Activated CD4-positive, alpha-beta memory T cell treated with anti-CD3 and anti-CD28 coated beads for 36 hours (primary cell): ENCODE measurements at regions of chr4 and their contacts with region 1.

Region 1: DNA sequence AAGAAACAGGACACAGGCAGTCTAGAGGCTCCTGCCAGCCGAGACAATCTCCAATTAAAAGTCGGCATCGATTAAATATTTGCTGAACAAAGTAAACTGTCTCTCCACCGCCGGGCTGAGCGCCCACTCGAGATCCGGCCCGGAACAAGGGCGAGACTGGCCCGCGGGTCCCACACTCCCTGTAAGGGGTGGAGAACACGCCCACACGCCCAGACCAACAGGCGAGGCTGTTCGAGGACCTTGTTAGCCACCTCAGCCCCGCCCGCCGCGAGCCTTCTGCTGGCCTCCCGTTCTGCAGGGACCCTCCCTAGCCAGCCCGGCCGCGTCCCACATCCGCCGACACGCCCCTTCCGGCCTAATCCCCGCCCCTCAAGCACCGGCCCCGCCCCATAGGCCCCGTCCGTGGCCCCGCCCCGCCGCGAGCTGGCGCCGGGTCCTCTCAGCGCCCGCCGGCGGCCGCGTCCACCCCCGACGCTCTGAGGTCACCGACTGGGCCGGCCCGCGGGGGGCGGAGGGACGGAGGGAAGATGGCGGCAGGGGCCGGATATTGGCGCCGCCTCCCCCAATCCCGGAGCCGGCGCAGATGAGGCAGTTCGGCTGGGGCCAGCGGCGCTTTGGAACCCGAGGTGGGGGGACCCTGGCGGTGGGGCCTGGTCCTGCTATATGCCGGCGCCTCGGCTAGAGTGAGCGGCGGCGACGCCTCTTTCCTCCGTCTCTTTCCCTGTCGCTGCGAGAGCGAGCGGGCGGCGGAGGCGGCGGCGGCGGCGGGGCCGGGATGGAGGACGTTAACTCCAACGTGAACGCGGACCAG is at the start of gene SLAIN2:
- DNase-seq: peak; percentile 99
- H3K4me3 Mint-ChIP-seq: peak within 1 kb of the TSS; percentile 99
- H3K27ac Mint-ChIP-seq: peak within 1 kb of the TSS; percentile 98
- H3K4me1 Mint-ChIP-seq: peaks cover 64% of the 10 kb centered on the region
- H3K27me3 Mint-ChIP-seq: no peaks in the 10 kb centered on the region
- total RNA-seq, gene SLAIN2: 54.9 to 63.8 TPM

Region 2: GRCh38 chr4:47914220-47914925 is 426.8 kb before region 1 on chr4 and contains the start of gene NFXL1:
- CTCF ChIA-PET with region 1: no interaction called
- POLR2A ChIA-PET with region 1: no interaction called
- intact Hi-C with region 1: loop called (anchors 1 kb)
- DNase-seq: peak; percentile 98
- H3K4me3 Mint-ChIP-seq: peak within 1 kb of the TSS; percentile 97
- H3K27ac Mint-ChIP-seq: peak within 1 kb of the TSS; percentile 93
- H3K4me1 Mint-ChIP-seq: peaks cover 30% of the 10 kb centered on the region
- H3K27me3 Mint-ChIP-seq: no peaks in the 10 kb centered on the region
- total RNA-seq, gene NFXL1: 10.9 to 12.0 TPM

Region 3: DNA sequence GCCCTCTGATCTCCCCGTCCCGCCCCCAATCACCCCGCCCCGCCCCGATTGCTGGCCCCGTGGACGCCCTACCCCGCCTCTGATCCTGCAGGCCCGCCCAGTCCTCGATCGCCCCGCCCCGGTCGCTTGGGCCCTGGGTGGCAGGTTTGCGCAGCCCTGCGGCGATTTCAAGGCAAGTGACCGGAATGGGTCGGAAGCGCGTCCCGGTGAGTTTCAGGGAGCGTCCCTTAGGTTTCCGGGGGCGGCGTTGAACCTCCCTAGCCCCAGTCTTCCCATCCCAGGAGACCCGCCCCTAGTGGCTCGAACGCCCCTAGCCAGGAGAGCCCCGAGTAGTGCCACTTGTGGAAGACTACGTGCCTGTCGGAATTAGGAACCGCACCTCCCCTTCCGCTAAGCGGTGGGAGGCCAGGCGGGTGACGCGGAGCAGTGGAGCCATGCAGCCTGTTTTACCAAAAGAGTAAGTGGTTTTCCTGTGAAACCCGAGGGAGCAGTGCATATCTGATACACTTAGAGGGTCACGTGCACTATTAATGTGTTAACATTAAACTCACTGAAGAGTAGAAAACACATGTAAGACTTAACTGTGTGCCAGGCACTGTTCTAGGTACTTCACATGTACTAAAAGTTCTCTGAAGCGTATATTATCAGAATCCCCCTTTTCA is 71.2 kb before region 1 on chr4:
- CTCF ChIA-PET with region 1: interaction called, 4 read pairs
- POLR2A ChIA-PET with region 1: no interaction called
- intact Hi-C with region 1: loop called (anchors 1 kb)
- DNase-seq: peak; percentile 95
- H3K4me3 Mint-ChIP-seq: peak overlapping the region; percentile 91
- H3K27ac Mint-ChIP-seq: peak overlapping the region; percentile 75
- H3K4me1 Mint-ChIP-seq: peaks cover 23% of the 10 kb centered on the region
- H3K27me3 Mint-ChIP-seq: no peaks in the 10 kb centered on the region

Region 4: GRCh38 chr4:48429709-48430474 is 88.7 kb after region 1 on chr4:
- CTCF ChIA-PET with region 1: no interaction called
- POLR2A ChIA-PET with region 1: no interaction called
- intact Hi-C with region 1: loop called (anchors 2 kb)
- DNase-seq: no peak
- H3K4me3 Mint-ChIP-seq: no peak overlapping the region
- H3K27ac Mint-ChIP-seq: no peak overlapping the region
- H3K4me1 Mint-ChIP-seq: peaks cover 36% of the 10 kb centered on the region
- H3K27me3 Mint-ChIP-seq: no peaks in the 10 kb centered on the region

Region 5: DNA sequence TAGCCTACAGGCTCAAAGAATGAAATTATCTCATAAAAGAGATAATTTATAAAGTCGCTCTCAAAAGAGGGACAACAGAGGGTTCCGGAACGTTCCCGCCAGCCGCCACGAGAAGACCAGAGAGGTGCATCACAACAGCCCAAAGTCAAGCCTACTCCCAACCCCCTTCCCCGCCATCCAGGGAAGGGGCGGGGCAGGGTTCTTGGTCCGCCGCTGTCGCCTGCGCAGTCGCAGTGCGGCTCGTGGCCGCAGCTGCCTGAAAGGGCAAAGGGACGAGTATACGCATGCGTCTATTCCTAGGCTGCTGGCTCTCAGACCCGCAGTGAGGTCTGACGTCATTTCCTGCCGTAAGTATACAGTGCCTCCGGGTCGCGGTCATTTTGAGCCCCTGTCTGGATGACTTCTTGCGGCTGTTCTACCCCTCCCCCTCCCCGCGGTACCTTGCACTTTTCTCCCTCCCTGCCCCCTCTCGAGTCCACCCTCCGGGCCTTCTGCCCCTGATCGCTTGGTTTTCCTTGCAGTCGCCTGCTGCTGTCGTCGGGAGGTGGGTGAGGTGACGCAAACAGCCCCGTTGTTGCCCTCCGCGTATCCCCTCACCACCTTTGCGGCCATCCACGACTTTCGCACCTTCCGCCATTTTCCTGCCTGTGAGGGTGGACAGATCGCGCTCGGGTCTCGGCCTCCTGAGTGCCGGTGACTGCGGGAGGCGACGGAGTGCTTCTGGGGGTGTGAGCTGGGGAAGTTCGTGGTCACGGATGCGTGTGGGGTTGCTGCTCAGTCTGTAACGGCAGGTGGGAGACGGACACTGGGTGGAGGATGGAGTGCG is 489.7 kb after region 1 on chr4 and contains the start of gene OCIAD1:
- CTCF ChIA-PET with region 1: no interaction called
- POLR2A ChIA-PET with region 1: no interaction called
- intact Hi-C with region 1: loop called (anchors 1 kb)
- DNase-seq: peak; percentile 97
- H3K4me3 Mint-ChIP-seq: peak within 1 kb of the TSS; percentile 100
- H3K27ac Mint-ChIP-seq: peak within 1 kb of the TSS; percentile 99
- H3K4me1 Mint-ChIP-seq: peaks cover 19% of the 10 kb centered on the region
- H3K27me3 Mint-ChIP-seq: peaks cover 2% of the 10 kb centered on the region
- total RNA-seq, gene OCIAD1: 100 to 107 TPM